Transverse colon (tissue), 4 donors: ENCODE measurements at regions of chr10 and their contacts with region 1.

Region 1: GRCh38 chr10:86366033-86366901 is at the start of gene GRID1:
- DNase-seq: no peak
- H3K4me3 ChIP-seq: peak within 1 kb of the TSS; percentile 37 to 50 (median 42)
- H3K27ac ChIP-seq: peak within 1 kb of the TSS in 1 of 4 donors; percentile 36
- H3K4me1 ChIP-seq: peaks cover 4 to 38% (median 25%) of the 10 kb centered on the region in 4 donors
- H3K27me3 ChIP-seq: peaks cover 93% of the 10 kb centered on the region
- CTCF ChIP-seq: no peak
- EP300 ChIP-seq: no peak
- POLR2A ChIP-seq: no peak
- total RNA-seq, gene GRID1: 0.40 to 1.9 (median 1.00) TPM

Region 2: DNA sequence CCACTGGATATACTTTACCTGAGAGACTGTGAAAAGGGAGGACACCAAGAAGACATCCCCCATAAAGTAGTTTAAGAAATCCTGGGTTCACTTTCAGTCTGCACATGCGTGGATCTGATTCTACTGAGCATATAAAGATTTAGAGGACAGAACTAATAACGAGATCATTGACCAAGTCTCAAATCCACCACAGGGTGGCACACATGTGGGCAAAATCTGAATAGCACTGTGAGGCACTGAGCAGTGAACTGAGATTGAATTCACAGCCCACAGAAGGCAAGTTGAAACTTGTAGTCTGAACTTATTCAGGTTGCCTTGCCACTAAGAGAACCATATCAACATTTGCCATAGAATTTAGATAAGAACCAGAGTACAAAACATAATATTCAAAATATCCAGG is 818.2 kb before region 1 on chr10:
- in situ Hi-C with region 1: loop called in 1 of 4 experiments (anchors 25 kb)
- intact Hi-C with region 1: no loop called
- DNase-seq: peak; percentile 32
- H3K4me3 ChIP-seq: no peak overlapping the region
- H3K27ac ChIP-seq: no peak overlapping the region
- H3K4me1 ChIP-seq: no peaks in the 10 kb centered on the region
- H3K27me3 ChIP-seq: no peaks in the 10 kb centered on the region
- CTCF ChIP-seq: peak; percentile 18 to 53 (median 47)
- EP300 ChIP-seq: no peak
- POLR2A ChIP-seq: no peak

Region 3: GRCh38 chr10:85791818-85792532 is 574.3 kb before region 1 on chr10:
- in situ Hi-C with region 1: loop called in 1 of 4 experiments (anchors 25 kb)
- intact Hi-C with region 1: no loop called
- DNase-seq: no peak
- H3K4me3 ChIP-seq: no peak overlapping the region
- H3K27ac ChIP-seq: no peak overlapping the region
- H3K4me1 ChIP-seq: peaks cover 0 to 3% (median 0%) of the 10 kb centered on the region in 4 donors
- H3K27me3 ChIP-seq: no peaks in the 10 kb centered on the region
- CTCF ChIP-seq: peak in 2 of 5 experiments; percentile 6 to 14
- EP300 ChIP-seq: no peak
- POLR2A ChIP-seq: no peak

Region 4: DNA sequence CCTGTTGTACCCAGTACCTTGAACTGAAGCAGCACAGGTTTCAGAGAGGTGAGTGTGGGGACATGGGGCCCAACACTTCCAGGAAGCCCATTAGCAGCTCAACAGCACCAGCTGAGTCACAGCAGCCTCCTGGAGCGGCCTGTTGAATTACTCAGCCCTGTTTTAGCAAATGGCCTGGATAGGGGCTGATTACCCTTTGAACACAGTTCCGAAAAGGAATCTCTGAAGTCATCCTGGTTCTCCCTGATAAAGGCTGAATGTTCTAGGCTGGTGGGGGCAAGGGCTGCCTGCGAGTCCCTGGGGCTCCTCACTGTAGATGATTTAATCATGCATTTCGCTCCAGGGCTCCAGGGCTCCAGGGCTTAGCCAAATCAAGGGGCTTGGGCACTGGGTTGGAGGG is 287.2 kb before region 1 on chr10:
- in situ Hi-C with region 1: loop called in 1 of 4 experiments (anchors 25 kb)
- intact Hi-C with region 1: no loop called
- DNase-seq: no peak
- H3K4me3 ChIP-seq: no peak overlapping the region
- H3K27ac ChIP-seq: no peak overlapping the region
- H3K4me1 ChIP-seq: no peaks in the 10 kb centered on the region
- H3K27me3 ChIP-seq: no peaks in the 10 kb centered on the region
- CTCF ChIP-seq: no peak
- EP300 ChIP-seq: no peak
- POLR2A ChIP-seq: no peak

Region 5: GRCh38 chr10:86225103-86225782 is 141.0 kb before region 1 on chr10:
- in situ Hi-C with region 1: no loop called
- intact Hi-C with region 1: no loop called
- DNase-seq: no peak
- H3K4me3 ChIP-seq: no peak overlapping the region
- H3K27ac ChIP-seq: no peak overlapping the region
- H3K4me1 ChIP-seq: no peaks in the 10 kb centered on the region
- H3K27me3 ChIP-seq: no peaks in the 10 kb centered on the region
- CTCF ChIP-seq: no peak
- EP300 ChIP-seq: no peak
- POLR2A ChIP-seq: no peak

Region 6: DNA sequence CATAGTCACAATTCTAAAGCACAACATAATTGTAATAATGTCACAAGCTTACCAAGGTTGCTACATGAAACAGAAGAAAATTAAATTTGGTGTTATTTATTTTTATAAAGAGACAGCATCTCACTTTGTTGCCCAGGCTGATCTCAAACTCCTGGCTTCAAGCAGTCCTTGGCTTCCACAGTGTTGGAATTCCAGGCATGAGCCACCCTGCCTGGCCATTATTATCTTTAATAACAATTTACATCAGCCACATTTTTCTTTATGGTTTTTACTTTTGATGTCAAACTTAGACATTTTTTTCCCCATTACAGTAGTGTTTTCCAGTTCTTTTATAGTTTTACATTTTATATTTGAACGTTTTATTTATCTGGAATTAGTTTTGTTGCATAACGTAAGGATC is 436.9 kb after region 1 on chr10:
- in situ Hi-C with region 1: no loop called
- intact Hi-C with region 1: no loop called
- DNase-seq: no peak
- H3K4me3 ChIP-seq: no peak overlapping the region
- H3K27ac ChIP-seq: peak overlapping the region in 2 of 4 donors; percentile 9 to 25
- H3K4me1 ChIP-seq: peaks cover 0 to 23% (median 11%) of the 10 kb centered on the region in 4 donors
- H3K27me3 ChIP-seq: no peaks in the 10 kb centered on the region
- CTCF ChIP-seq: no peak
- EP300 ChIP-seq: no peak
- POLR2A ChIP-seq: no peak